ENCODE measurements at regions of chr12 and their contacts with region 1.

Region 1: GRCh38 chr12:57583008-57583831 is 7.8 kb upstream of the PIP4K2C start:
- DNase-seq: peak; percentile 79
- H3K4me3 Mint-ChIP-seq: no peak overlapping the region
- H3K27ac Mint-ChIP-seq: no peak overlapping the region
- H3K4me1 Mint-ChIP-seq: peaks cover 8% of the 10 kb centered on the region
- H3K27me3 Mint-ChIP-seq: peaks cover 7% of the 10 kb centered on the region

Region 2: GRCh38 chr12:57462251-57462911 is 120.8 kb before region 1 on chr12:
- CTCF ChIA-PET with region 1: interaction called, 14 read pairs
- DNase-seq: peak; percentile 93
- H3K4me3 Mint-ChIP-seq: peak overlapping the region; percentile 81
- H3K27ac Mint-ChIP-seq: peak overlapping the region; percentile 77
- H3K4me1 Mint-ChIP-seq: peaks cover 58% of the 10 kb centered on the region
- H3K27me3 Mint-ChIP-seq: peaks cover 50% of the 10 kb centered on the region

Region 3: GRCh38 chr12:57552835-57553313 is 30.3 kb before region 1 on chr12:
- CTCF ChIA-PET with region 1: no interaction called
- DNase-seq: no peak
- H3K4me3 Mint-ChIP-seq: no peak overlapping the region
- H3K27ac Mint-ChIP-seq: no peak overlapping the region
- H3K4me1 Mint-ChIP-seq: peaks cover 18% of the 10 kb centered on the region
- H3K27me3 Mint-ChIP-seq: peaks cover 48% of the 10 kb centered on the region

Region 4: DNA sequence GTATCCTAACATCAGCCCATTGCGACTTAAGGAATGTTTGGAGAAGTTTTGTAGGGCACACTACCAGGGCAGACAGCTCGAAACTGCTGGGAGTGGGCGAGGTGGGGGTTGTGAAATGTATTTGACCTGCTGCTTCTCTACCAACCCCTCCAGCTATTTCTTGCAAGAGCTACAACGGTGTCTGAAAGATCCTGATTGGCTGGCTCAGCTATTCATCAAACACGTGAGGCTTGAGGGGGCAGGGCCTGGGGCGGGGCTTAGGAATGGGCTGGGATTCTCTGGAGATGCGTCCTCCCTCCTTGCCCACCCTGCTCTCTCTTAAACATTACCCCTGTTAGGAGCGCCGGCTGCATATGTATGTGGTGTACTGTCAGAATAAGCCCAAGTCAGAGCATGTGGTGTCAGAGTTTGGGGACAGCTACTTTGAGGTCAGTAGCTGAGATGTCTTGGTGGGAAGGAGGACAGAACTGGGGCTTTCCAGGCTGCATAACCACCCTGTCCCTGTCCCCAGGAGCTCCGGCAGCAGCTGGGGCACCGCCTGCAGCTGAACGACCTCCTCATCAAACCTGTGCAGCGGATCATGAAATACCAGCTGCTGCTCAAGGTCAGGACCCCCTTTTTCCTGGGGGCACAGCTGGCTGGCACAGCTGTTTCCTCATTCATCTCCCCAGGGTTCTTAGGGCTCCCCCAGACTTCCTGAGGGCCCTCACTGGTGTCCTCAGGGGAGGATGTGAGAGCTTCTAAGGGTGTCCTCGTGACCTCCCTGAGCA is 31.1 kb after region 1 on chr12:
- CTCF ChIA-PET with region 1: interaction called, 143 read pairs
- DNase-seq: peak; percentile 35
- H3K4me3 Mint-ChIP-seq: no peak overlapping the region
- H3K27ac Mint-ChIP-seq: no peak overlapping the region
- H3K4me1 Mint-ChIP-seq: peaks cover 16% of the 10 kb centered on the region
- H3K27me3 Mint-ChIP-seq: peaks cover 100% of the 10 kb centered on the region

Region 5: DNA sequence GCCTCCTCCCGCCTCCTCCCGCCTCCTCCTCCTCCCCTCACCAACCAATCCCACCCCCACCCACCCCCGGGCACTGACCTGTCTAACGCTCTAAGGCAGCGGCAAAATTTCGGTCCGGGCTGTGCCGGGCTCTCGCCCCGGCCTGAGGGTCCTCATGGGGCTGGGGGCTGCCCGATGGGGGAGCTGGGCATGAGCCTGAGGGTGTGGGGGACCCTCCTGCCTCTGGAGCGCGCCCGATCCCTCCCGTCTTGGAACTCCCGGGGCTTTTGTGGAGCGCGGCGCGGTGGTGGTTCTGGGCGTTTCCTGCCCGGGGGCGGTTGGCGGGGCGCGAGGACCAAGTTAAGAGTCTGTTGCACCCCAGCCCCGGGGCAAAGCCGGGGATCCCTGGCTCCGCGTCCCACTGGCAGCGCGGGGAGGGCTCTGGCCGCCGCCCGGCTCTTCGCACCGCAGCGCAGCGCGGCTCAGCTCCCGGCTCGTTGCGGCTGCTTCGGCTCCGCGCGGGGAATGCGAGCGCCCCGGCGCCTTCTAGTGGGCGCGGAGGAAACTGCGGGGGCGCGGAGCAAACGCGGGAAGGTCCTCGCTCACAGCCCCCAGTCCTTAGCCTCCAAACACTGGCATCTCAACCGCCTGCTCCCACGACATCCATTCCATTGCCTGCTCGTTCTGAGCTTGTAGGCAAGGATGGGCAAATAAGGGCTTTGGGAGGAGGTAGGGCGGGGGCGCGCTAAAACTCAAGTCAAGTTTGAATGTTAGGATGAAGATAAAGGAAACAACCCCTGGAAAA is 49.7 kb after region 1 on chr12 and contains the start of gene B4GALNT1:
- CTCF ChIA-PET with region 1: interaction called, 29 read pairs
- DNase-seq: peak; percentile 66
- H3K4me3 Mint-ChIP-seq: peak within 1 kb of the TSS; percentile 58
- H3K27ac Mint-ChIP-seq: no peak within 1 kb of the TSS
- H3K4me1 Mint-ChIP-seq: peaks cover 14% of the 10 kb centered on the region
- H3K27me3 Mint-ChIP-seq: peaks cover 81% of the 10 kb centered on the region

Region 6: GRCh38 chr12:57741844-57742738 is 158.9 kb after region 1 on chr12:
- CTCF ChIA-PET with region 1: interaction called, 12 read pairs
- DNase-seq: peak; percentile 92
- H3K4me3 Mint-ChIP-seq: peak overlapping the region; percentile 80
- H3K27ac Mint-ChIP-seq: peak overlapping the region; percentile 82
- H3K4me1 Mint-ChIP-seq: peaks cover 62% of the 10 kb centered on the region
- H3K27me3 Mint-ChIP-seq: no peaks in the 10 kb centered on the region

Measured in activated naive CD4-positive, alpha-beta T cell treated with anti-CD3 and anti-CD28 coated beads, Interleukin-2, amount 10 ng/mL, durations not matched to agents 7 days and 5 days (primary cell).